WTC11 (cell line): ENCODE measurements at regions of chr3 and their contacts with region 1.

Region 1: DNA sequence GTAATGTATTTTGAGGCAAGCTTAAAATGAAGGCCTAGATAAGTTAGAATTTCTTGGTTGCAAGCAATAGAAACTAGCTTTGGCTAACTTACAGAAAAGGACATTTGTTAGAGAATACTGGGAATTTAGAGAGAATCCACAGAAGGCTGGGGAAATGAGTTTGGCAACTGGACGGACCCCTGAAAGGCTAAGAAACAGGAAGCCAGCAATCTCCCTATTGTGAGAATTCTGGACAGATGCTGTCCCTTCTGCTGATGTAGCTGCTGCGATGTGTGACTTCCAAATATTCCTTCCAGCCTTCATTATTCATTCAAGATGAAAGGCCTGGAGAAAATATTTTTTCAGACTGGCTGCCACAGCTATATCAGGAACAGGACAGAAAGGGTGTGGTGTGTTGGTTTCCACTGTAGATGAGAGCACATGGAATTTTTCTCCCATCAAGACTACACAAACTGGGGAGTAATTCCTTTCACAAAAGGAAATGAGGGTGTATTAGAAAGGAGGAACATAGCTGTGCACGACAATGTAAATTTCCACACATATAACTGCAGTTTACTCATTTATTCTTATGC is 213.5 kb downstream of the CPNE4 start:
- DNase-seq: no peak
- ATAC-seq: no peak
- H3K4me3 Mint-ChIP-seq: no peak overlapping the region
- H3K27ac Mint-ChIP-seq: no peak overlapping the region
- H3K4me1 Mint-ChIP-seq: peaks cover 25% of the 10 kb centered on the region
- H3K27me3 Mint-ChIP-seq: no peaks in the 10 kb centered on the region; the same call in 1 of the 2 replicates
- CTCF ChIP-seq: no peak

Region 2: GRCh38 chr3:131762981-131763564 is 58.2 kb before region 1 on chr3:
- CTCF ChIA-PET with region 1: no interaction called
- POLR2A ChIA-PET with region 1: interaction called, 11 read pairs
- DNase-seq: no peak
- ATAC-seq: no peak
- H3K4me3 Mint-ChIP-seq: no peak overlapping the region
- H3K27ac Mint-ChIP-seq: no peak overlapping the region
- H3K4me1 Mint-ChIP-seq: no peaks in the 10 kb centered on the region
- H3K27me3 Mint-ChIP-seq: peaks cover 15% of the 10 kb centered on the region
- CTCF ChIP-seq: no peak